GM12878 (cell line): ENCODE measurements at regions of chr19 and their contacts with region 1.

Region 1: GRCh38 chr19:28466107-28467045 is 746.6 kb downstream of the UQCRFS1 start:
- DNase-seq: no peak
- ATAC-seq: no peak
- H3K4me3 ChIP-seq: no peak overlapping the region
- H3K27ac ChIP-seq: no peak overlapping the region
- H3K4me1 ChIP-seq: no peaks in the 10 kb centered on the region
- H3K27me3 ChIP-seq: no peaks in the 10 kb centered on the region
- CTCF ChIP-seq: peak; percentile 45 to 51 (median 51); a peak in 5 of 6 replicates
- EP300 ChIP-seq: no peak
- POLR2A ChIP-seq: no peak
- RAD21 ChIP-seq: peak; percentile 43

Region 2: GRCh38 chr19:28485292-28485691 is 18.9 kb after region 1 on chr19:
- CTCF ChIA-PET with region 1: interaction called, 24 read pairs
- POLR2A ChIA-PET with region 1: interaction called, 15 read pairs
- RAD21 ChIA-PET with region 1: interaction called, 131 read pairs
- SMC1A ChIA-PET with region 1: interaction called, 76 read pairs
- in situ Hi-C with region 1: no loop called
- intact Hi-C with region 1: no loop called
- DNase-seq: no peak
- ATAC-seq: no peak
- H3K4me3 ChIP-seq: no peak overlapping the region
- H3K27ac ChIP-seq: no peak overlapping the region
- H3K4me1 ChIP-seq: no peaks in the 10 kb centered on the region
- H3K27me3 ChIP-seq: no peaks in the 10 kb centered on the region
- CTCF ChIP-seq: no peak
- EP300 ChIP-seq: no peak
- POLR2A ChIP-seq: no peak
- RAD21 ChIP-seq: no peak

Region 3: GRCh38 chr19:28519952-28520861 is 53.8 kb after region 1 on chr19:
- CTCF ChIA-PET with region 1: interaction called, 6 read pairs
- POLR2A ChIA-PET with region 1: interaction called, 7 read pairs
- RAD21 ChIA-PET with region 1: interaction called, 23 read pairs
- SMC1A ChIA-PET with region 1: interaction called, 22 read pairs
- in situ Hi-C with region 1: no loop called
- intact Hi-C with region 1: no loop called
- DNase-seq: no peak
- ATAC-seq: no peak
- H3K4me3 ChIP-seq: no peak overlapping the region
- H3K27ac ChIP-seq: no peak overlapping the region
- H3K4me1 ChIP-seq: no peaks in the 10 kb centered on the region
- H3K27me3 ChIP-seq: no peaks in the 10 kb centered on the region
- CTCF ChIP-seq: no peak
- EP300 ChIP-seq: no peak
- POLR2A ChIP-seq: no peak
- RAD21 ChIP-seq: no peak

Region 4: DNA sequence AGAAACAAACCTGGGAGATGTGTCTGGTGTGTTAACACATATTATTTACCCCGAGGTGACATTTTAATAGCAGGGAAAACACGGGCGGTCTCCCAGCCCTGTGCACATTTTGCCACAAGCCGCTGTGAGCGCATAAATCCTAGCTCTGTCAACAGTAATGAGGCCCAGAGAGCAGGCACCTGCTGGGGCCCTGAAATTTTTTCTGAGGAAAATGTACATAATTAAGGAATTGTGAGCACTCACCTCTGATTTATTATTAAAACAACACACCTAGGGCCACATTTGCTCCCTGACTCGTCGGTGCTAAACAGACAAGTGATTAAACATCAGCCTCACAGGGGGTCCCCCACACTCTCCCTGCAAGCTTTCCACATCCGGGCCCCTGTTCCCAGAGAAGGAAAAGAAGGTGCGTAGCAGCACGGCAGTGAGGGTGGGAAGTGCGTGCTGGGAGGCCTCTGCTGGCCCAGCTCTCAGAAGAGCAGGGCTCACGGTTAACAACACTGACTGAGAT is 130.2 kb after region 1 on chr19:
- CTCF ChIA-PET with region 1: interaction called, 7 read pairs
- POLR2A ChIA-PET with region 1: no interaction called
- RAD21 ChIA-PET with region 1: interaction called, 4 read pairs
- SMC1A ChIA-PET with region 1: interaction called, 15 read pairs
- in situ Hi-C with region 1: no loop called
- intact Hi-C with region 1: no loop called
- DNase-seq: no peak
- ATAC-seq: no peak
- H3K4me3 ChIP-seq: no peak overlapping the region
- H3K27ac ChIP-seq: no peak overlapping the region
- H3K4me1 ChIP-seq: no peaks in the 10 kb centered on the region
- H3K27me3 ChIP-seq: no peaks in the 10 kb centered on the region
- CTCF ChIP-seq: no peak
- EP300 ChIP-seq: no peak
- POLR2A ChIP-seq: no peak
- RAD21 ChIP-seq: no peak

Region 5: GRCh38 chr19:28612275-28612769 is 145.9 kb after region 1 on chr19:
- CTCF ChIA-PET with region 1: interaction called, 25 read pairs
- POLR2A ChIA-PET with region 1: interaction called, 7 read pairs
- RAD21 ChIA-PET with region 1: interaction called, 4 read pairs
- SMC1A ChIA-PET with region 1: interaction called, 13 read pairs
- in situ Hi-C with region 1: no loop called
- intact Hi-C with region 1: no loop called
- DNase-seq: no peak
- ATAC-seq: no peak
- H3K4me3 ChIP-seq: no peak overlapping the region
- H3K27ac ChIP-seq: no peak overlapping the region
- H3K4me1 ChIP-seq: no peaks in the 10 kb centered on the region
- H3K27me3 ChIP-seq: no peaks in the 10 kb centered on the region
- CTCF ChIP-seq: no peak
- EP300 ChIP-seq: no peak
- POLR2A ChIP-seq: no peak
- RAD21 ChIP-seq: no peak

Region 6: GRCh38 chr19:28710278-28710677 is 243.9 kb after region 1 on chr19:
- CTCF ChIA-PET with region 1: interaction called, 9 read pairs
- POLR2A ChIA-PET with region 1: no interaction called
- RAD21 ChIA-PET with region 1: interaction called, 4 read pairs
- SMC1A ChIA-PET with region 1: interaction called, 5 read pairs
- in situ Hi-C with region 1: loop called (anchors 5 kb)
- intact Hi-C with region 1: loop called (anchors 2 kb)
- DNase-seq: peak; percentile 3
- ATAC-seq: 0 out of 3 replicates have a peak, but pooled peaks have one; percentile 42
- H3K4me3 ChIP-seq: no peak overlapping the region
- H3K27ac ChIP-seq: no peak overlapping the region
- H3K4me1 ChIP-seq: no peaks in the 10 kb centered on the region
- H3K27me3 ChIP-seq: no peaks in the 10 kb centered on the region
- CTCF ChIP-seq: peak; percentile 46 to 56 (median 50); a peak in 5 of 6 replicates
- EP300 ChIP-seq: no peak
- POLR2A ChIP-seq: no peak
- RAD21 ChIP-seq: peak; percentile 66